ENCODE measurements at regions of chr9 and their contacts with region 1.

Region 1: GRCh38 chr9:5375091-5375490 is 35.4 kb upstream of the RLN1 start:
- DNase-seq: no peak
- H3K4me3 Mint-ChIP-seq: peak overlapping the region; percentile 23
- H3K27ac Mint-ChIP-seq: peak overlapping the region; percentile 81
- H3K4me1 Mint-ChIP-seq: peaks cover 32% of the 10 kb centered on the region
- H3K27me3 Mint-ChIP-seq: no peaks in the 10 kb centered on the region

Region 2: DNA sequence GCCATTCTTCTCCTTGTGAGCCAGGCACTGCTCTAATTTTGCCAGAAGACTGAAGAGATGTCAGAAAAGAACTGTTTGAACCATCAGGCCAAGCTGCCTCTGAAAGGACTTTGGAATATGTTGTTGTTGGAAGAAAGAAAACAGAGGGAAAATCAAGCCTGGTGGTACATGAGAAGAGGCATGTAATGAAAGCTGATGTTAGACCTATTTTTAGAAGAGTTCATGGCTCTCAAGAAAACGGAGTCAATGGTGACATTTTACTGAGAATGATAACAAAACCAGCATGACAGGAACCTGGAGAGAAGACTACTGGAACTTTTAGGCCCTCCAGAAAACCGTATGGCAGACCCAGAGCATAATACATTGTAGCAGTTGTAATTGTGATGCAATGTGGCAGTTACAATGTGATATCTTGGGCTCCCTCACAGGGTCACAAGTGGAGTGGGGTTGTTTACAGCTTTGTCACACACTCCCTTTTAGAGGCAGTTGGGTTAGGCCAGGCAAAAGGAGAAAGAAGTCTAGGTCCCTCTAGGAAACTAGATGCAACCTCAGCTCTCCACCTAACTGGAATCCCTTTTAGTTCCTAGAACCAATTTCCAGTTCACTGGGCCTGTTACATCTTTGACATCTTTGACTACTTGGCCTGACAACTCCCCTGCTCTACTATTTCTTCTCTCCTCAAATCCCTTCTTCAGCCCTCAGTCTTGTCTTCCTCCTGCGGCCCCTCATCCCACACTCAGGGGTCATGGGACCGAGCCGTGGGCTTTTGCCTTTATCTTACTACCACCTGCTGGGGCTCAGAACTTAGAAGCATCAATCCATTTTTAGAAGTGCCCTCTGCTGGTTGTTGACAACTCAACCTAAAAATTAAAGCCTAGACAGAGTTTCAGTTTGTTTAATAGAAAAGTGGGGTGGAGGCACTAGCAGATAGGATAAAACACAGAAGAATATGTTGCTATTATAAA is 451.2 kb before region 1 on chr9:
- intact Hi-C with region 1: loop called (anchors 10 kb)
- DNase-seq: peak; percentile 19
- H3K4me3 Mint-ChIP-seq: no peak overlapping the region
- H3K27ac Mint-ChIP-seq: no peak overlapping the region
- H3K4me1 Mint-ChIP-seq: peaks cover 33% of the 10 kb centered on the region
- H3K27me3 Mint-ChIP-seq: no peaks in the 10 kb centered on the region

Region 3: DNA sequence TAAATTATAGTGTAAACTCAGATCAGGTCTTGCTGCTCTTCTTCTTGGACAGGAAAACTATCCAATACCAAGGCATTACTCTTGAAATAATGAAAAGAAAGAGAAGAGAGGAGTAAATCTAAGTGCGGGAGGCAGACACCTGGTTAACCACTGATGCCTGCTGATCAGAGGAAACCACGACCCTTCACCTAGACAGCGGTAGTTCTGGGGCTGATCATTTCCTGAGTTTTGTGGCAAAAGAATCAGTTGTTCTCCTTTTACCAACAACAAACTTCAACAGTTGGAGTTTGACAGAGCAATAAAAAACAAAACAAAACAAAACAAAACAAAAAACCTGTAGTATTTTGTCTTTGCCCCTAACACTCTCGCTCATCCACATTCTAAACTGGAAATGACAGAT is 38.4 kb before region 1 on chr9:
- intact Hi-C with region 1: loop called (anchors 5 kb)
- DNase-seq: peak; percentile 23
- H3K4me3 Mint-ChIP-seq: no peak overlapping the region
- H3K27ac Mint-ChIP-seq: no peak overlapping the region
- H3K4me1 Mint-ChIP-seq: peaks cover 36% of the 10 kb centered on the region
- H3K27me3 Mint-ChIP-seq: no peaks in the 10 kb centered on the region

Region 4: DNA sequence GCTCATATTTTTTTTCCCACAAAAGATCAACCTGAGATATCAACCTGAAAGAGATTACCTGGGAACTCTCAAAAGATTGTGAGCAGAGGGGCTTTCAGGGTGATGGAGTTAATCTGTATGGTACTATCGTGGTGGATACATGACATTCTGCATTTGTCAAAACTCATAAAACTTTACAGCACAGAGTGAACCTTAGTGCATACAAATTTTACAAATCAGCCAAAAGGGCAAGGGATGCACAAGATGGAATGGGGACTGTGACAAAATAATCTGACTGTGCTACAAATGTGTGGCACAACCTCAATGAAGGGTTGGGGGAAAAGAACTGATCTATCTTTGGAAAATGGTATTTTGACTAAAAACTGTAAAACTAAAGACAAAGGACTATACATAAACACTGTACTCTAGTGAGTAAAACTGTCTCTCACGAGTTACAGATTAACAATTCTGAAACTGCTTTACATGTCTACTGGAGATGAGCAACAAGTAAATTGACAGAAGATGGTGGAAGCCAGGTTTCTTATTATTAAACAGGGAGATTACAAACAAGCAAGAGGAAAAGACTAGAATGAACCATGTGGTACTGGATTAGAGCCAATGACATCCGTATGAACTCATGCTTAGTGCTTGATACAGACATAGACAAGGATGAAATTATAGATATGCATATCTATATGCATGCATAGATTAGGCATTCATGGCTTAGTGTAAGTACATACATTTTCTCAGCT is 10.6 kb before region 1 on chr9:
- intact Hi-C with region 1: loop called (anchors 1 kb)
- DNase-seq: no peak
- H3K4me3 Mint-ChIP-seq: no peak overlapping the region
- H3K27ac Mint-ChIP-seq: peak overlapping the region; percentile 14
- H3K4me1 Mint-ChIP-seq: peaks cover 20% of the 10 kb centered on the region
- H3K27me3 Mint-ChIP-seq: no peaks in the 10 kb centered on the region

Region 5: DNA sequence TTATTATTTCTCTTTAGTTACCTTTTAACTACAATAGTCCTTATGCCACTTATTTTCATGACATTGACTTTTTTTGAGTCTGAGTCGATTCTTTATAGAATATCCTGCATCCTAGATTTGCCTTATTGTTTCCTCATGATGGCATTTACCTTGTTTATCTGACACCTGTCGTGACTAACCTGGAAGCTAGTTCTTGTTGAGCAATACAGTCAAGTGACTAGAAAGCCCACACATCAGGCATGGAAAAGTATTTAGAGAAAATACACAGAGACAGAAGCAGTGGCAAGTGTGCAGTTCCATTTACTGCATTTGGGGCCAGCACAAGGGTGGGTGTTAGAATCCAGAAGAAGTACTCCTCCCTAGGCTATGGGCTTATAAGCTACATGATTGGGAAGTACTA is 360.0 kb after region 1 on chr9:
- intact Hi-C with region 1: no loop called
- DNase-seq: no peak
- H3K4me3 Mint-ChIP-seq: no peak overlapping the region
- H3K27ac Mint-ChIP-seq: no peak overlapping the region
- H3K4me1 Mint-ChIP-seq: no peaks in the 10 kb centered on the region
- H3K27me3 Mint-ChIP-seq: no peaks in the 10 kb centered on the region

Region 6: GRCh38 chr9:6080154-6080716 is 705.1 kb after region 1 on chr9:
- intact Hi-C with region 1: no loop called
- DNase-seq: peak; percentile 37
- H3K4me3 Mint-ChIP-seq: peak overlapping the region; percentile 83
- H3K27ac Mint-ChIP-seq: peak overlapping the region; percentile 80
- H3K4me1 Mint-ChIP-seq: peaks cover 11% of the 10 kb centered on the region
- H3K27me3 Mint-ChIP-seq: peaks cover 4% of the 10 kb centered on the region

Region 7: GRCh38 chr9:6106576-6107339 is 731.7 kb after region 1 on chr9:
- intact Hi-C with region 1: no loop called
- DNase-seq: no peak
- H3K4me3 Mint-ChIP-seq: no peak overlapping the region
- H3K27ac Mint-ChIP-seq: no peak overlapping the region
- H3K4me1 Mint-ChIP-seq: no peaks in the 10 kb centered on the region
- H3K27me3 Mint-ChIP-seq: no peaks in the 10 kb centered on the region

Measured in activated T-helper 1 cell treated with anti-CD3 and anti-CD28 coated beads, Interleukin-12 subunit alpha, Interleukin-12 subunit beta, Interleukin-2, Interleukin-4 antibody, amounts not matched to agents 30 ng/mL and 10 ng/mL and 1 ng/mL, durations not matched to agents 14 hours and 24 hours and 36 hours (primary cell).